Mammary epithelial cell (primary cell): ENCODE measurements at regions of chr7 and their contacts with region 1.

Region 1: DNA sequence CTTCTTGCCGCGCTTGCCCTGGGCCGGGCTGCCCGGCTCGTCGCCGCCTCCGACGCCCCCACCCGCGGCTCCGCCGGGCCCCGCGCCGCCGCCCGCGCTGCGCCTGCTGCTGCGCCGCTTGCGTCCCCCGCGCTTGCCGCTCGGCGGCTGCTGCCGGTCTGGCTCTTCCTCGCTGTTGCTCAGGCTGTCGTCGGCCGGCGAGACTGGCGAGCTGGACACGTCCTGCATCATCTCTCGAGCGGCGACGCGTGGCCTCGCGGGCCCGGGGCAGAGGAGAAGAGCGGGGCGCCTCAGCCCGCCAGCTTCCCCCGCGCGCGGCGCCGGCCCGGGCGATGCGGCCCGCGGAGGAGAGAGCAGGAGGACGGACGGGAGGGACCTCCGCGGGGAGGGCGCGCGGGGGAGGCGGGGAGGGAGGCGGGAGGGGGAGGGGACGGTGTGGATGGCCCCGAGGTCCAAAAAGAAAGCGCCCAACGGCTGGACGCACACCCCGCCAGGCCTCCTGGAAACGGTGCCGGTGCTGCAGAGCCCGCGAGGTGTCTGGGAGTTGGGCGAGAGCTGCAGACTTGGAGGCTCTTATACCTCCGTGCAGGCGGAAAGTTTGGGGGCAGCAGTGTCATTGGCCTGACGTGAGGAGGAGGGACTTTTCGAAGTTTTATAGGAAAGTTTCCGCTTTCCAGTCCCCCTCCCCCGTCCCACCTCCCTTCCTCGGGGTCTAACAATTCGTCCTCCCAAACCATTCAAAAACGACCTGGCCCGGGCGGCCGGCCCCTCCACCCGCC is at the start of gene TWIST1:
- DNase-seq: peak; percentile 32
- H3K4me3 ChIP-seq: peak within 1 kb of the TSS; percentile 49 to 76 (median 68)
- H3K27ac ChIP-seq: no peak within 1 kb of the TSS
- H3K4me1 ChIP-seq: peaks cover 23% of the 10 kb centered on the region
- H3K27me3 ChIP-seq: peaks cover 44% of the 10 kb centered on the region
- CTCF ChIP-seq: no peak
- total RNA-seq, gene TWIST1: 2.3 TPM

Region 2: GRCh38 chr7:18693406-18693805 is 423.9 kb before region 1 on chr7:
- CTCF ChIA-PET with region 1: interaction called, 3 read pairs
- dilution Hi-C with region 1: no loop called
- in situ Hi-C with region 1: no loop called
- intact Hi-C with region 1: loop called (anchors 5 kb)
- DNase-seq: peak; percentile 56
- H3K4me3 ChIP-seq: no peak overlapping the region
- H3K27ac ChIP-seq: no peak overlapping the region
- H3K4me1 ChIP-seq: no peaks in the 10 kb centered on the region
- H3K27me3 ChIP-seq: no peaks in the 10 kb centered on the region
- CTCF ChIP-seq: peak; percentile 71 to 82

Region 3: DNA sequence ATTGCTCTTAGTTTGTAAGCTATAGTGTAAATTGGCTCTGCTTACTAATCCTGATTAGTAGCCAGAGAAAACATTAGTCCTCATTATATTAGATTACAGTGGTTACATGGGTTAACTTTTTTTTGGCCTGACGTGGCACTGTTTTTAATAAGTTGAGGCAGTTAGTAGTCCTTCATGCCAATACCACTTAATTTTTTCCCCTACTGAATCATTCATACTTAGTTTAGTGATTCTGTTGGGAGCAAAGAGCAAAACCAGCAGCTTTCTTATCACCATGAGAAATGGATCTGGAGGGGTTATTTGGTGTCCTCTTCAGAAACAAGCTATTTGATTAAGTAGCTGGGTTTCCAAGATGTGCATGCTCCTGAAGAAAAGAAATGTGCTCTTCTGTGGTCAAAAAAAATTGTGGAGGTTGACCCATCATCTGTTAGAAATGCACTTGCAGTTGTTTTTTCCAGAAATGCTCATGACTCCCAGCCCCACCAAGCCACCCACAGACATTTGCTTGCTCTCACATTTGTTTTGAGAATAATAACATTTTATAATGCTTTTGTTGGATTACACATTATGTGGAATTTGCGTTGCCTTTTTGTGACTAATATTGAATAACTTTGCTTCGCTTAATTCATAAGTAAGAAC is 363.2 kb before region 1 on chr7:
- CTCF ChIA-PET with region 1: no interaction called
- dilution Hi-C with region 1: no loop called
- in situ Hi-C with region 1: no loop called
- intact Hi-C with region 1: loop called (anchors 5 kb)
- DNase-seq: peak; percentile 43
- H3K4me3 ChIP-seq: no peak overlapping the region
- H3K27ac ChIP-seq: no peak overlapping the region
- H3K4me1 ChIP-seq: no peaks in the 10 kb centered on the region
- H3K27me3 ChIP-seq: no peaks in the 10 kb centered on the region
- CTCF ChIP-seq: no peak

Region 4: DNA sequence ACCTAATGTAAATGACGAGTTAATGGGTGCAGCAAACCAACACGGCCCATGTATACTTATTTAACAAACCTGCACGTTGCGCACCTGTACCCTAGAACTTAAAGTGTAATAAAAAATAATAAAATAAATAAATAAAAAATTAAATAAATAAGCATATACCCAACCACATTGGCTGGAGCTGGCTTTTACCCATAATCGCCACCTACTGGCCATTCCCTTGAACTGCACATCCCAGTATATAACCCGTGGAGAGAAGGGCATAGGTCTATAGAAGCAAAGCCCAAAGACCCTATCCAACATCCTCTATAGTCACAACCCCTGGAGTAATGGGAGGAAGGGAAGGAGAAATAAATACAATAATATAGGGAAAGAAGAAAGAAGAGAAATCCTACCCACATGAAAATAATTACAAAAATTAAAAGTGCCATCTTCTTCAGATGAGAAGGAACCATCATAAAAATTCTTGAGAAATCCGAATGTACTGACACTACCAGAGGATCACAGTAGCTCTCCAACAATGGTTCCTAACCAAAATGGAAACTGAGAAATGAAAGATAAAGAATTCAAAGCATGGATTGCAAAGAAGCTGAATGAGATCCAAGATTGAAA is 65.4 kb before region 1 on chr7:
- CTCF ChIA-PET with region 1: no interaction called
- dilution Hi-C with region 1: loop called (anchors 5 kb)
- in situ Hi-C with region 1: no loop called
- intact Hi-C with region 1: no loop called
- DNase-seq: peak; percentile 8
- H3K4me3 ChIP-seq: no peak overlapping the region
- H3K27ac ChIP-seq: no peak overlapping the region
- H3K4me1 ChIP-seq: no peaks in the 10 kb centered on the region
- H3K27me3 ChIP-seq: no peaks in the 10 kb centered on the region
- CTCF ChIP-seq: peak; percentile 77 to 92

Region 5: DNA sequence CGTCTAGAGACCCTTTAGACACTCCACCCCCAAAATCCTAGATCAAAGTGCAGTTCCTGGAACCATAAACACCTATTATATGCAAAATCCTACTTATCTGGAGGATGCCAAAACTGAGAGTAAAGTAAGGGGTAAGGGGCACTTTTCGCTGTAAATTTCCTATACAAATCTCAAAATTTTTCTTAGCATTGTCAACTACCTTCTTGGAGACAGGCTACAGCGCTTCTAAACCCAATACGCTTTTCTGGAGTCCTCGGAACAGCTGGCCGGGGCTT is 10.3 kb before region 1 on chr7:
- CTCF ChIA-PET with region 1: no interaction called
- dilution Hi-C with region 1: no loop called
- in situ Hi-C with region 1: no loop called
- intact Hi-C with region 1: no loop called
- DNase-seq: no peak
- H3K4me3 ChIP-seq: no peak overlapping the region
- H3K27ac ChIP-seq: no peak overlapping the region
- H3K4me1 ChIP-seq: peaks cover 4% of the 10 kb centered on the region
- H3K27me3 ChIP-seq: peaks cover 65% of the 10 kb centered on the region
- CTCF ChIP-seq: no peak

Region 6: DNA sequence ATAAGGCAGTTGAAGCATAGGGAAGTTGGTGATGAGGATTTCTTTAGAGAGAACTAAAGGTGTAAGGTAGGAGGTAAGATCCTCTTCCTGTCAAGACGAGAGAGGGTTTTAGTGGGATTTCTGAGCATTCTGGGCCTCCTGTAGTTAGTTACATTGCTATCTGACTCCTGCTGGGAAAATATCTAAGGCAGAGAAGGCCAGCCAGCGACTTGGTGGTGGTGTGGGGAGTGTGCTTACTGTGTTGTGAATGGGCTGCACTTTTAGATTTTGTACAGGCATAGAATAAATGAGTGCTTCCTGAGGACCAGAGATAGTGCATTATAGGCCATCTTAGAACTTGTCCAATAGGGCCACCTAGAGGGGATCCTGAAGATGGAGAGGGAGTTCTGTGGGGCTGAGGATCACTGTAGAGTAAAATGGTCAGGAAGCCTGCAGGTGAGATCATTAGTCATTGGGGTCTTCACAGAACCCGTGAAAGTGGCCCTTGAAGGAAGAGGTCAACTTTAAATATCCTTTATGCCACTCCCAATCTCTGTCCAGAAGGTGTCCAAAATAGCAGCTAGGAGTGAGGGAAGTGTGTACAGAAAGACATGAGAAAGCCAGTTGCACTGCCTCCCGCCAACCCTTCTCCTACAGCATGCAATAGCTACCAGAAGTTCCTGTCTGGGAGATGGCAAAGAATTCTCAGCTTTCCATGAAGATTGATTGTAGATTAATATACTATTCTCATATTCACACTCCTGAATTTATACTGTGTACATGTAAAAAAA is 324.9 kb after region 1 on chr7:
- CTCF ChIA-PET with region 1: no interaction called
- dilution Hi-C with region 1: no loop called
- in situ Hi-C with region 1: no loop called
- intact Hi-C with region 1: loop called (anchors 1 kb)
- DNase-seq: peak; percentile 26
- H3K4me3 ChIP-seq: no peak overlapping the region
- H3K27ac ChIP-seq: no peak overlapping the region
- H3K4me1 ChIP-seq: no peaks in the 10 kb centered on the region
- H3K27me3 ChIP-seq: peaks cover 2% of the 10 kb centered on the region
- CTCF ChIP-seq: peak; percentile 59 to 69

Region 7: GRCh38 chr7:19621740-19622139 is 504.5 kb after region 1 on chr7:
- CTCF ChIA-PET with region 1: interaction called, 5 read pairs
- dilution Hi-C with region 1: no loop called
- in situ Hi-C with region 1: no loop called
- intact Hi-C with region 1: loop called (anchors 2 kb)
- DNase-seq: peak; percentile 58
- H3K4me3 ChIP-seq: no peak overlapping the region
- H3K27ac ChIP-seq: no peak overlapping the region
- H3K4me1 ChIP-seq: no peaks in the 10 kb centered on the region
- H3K27me3 ChIP-seq: no peaks in the 10 kb centered on the region
- CTCF ChIP-seq: peak; percentile 23 to 51

Region 8: GRCh38 chr7:19665399-19666008 is 548.2 kb after region 1 on chr7:
- CTCF ChIA-PET with region 1: no interaction called
- dilution Hi-C with region 1: no loop called
- in situ Hi-C with region 1: loop called in 1 of 2 experiments (anchors 25 kb)
- intact Hi-C with region 1: loop called (anchors 2 kb)
- DNase-seq: peak; percentile 11
- H3K4me3 ChIP-seq: no peak overlapping the region
- H3K27ac ChIP-seq: no peak overlapping the region
- H3K4me1 ChIP-seq: peaks cover 4% of the 10 kb centered on the region
- H3K27me3 ChIP-seq: no peaks in the 10 kb centered on the region
- CTCF ChIP-seq: peak; percentile 52 to 64